ENCODE measurements at regions of chr6 and their contacts with region 1.

Region 1: DNA sequence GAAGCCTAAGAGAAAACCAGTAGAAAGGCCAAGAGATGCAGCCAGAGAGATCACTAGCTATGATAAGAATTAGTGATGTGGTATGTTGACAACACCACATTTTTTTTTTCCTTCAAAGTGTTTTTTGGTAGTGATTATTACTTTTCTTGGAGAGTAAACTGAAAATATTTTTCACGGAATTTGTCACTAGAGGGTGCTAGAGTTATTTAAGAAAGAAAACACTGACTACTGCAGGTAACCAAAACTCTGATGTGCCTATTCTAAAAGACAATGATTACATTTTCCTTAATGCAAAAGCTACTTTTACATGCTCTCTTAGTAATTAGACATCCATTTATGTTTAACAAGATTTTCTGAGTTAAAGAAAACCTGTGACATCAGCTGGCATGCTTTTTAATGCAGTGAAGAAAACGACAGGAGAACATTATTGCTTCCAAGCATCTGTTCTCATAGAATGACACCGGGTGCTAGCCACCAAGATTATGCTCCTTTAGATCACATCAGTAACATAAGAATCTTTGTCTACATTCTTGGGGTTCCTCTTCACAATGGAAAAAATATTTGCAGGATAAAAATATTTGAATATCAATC is 28.8 kb downstream of the RWDD2A start:
- DNase-seq: peak in 4 of 5 donors; percentile 10 to 27 (median 19)
- H3K4me3 ChIP-seq: no peak overlapping the region
- H3K4me3 Mint-ChIP-seq: no peak overlapping the region
- H3K27ac ChIP-seq: no peak overlapping the region
- H3K27ac Mint-ChIP-seq: no peak overlapping the region
- H3K4me1 ChIP-seq: no peaks in the 10 kb centered on the region
- H3K4me1 Mint-ChIP-seq: no peaks in the 10 kb centered on the region
- H3K27me3 ChIP-seq: no peaks in the 10 kb centered on the region
- H3K27me3 Mint-ChIP-seq: peaks cover 0 to 1% of the 10 kb centered on the region in 2 donors

Region 2: DNA sequence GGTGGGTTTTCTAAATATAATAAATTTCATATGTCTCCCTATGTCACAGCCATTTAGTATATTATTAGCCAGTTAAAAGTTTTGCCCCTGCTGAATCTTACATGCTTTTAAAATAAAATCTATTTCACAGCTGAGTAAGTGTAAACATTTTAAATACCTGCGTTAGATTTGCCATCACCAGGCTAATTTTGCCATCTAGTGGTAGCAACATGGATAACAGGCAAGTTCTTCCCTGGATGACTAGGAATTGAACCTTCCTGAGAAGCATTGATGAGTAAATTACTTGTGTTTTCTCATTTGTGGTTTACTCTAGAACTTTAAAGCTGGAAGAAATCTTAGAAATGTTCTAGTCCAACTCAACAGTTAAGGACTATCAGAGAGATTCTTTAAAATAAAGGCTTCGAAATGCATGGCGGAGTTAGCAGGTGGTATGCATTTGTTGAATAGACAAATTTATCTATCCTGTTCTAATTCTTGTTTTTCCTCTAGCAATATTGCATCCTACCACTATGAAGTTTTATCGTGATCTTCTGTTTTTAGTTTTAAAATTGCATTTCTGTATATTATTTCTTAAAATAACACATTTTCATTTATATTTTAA is 293.0 kb after region 1 on chr6:
- CTCF ChIA-PET with region 1: interaction called, 41 read pairs
- POLR2A ChIA-PET with region 1: no interaction called
- intact Hi-C with region 1: no loop called
- DNase-seq: peak in 4 of 5 donors; percentile 23 to 31 (median 26)
- H3K4me3 ChIP-seq: no peak overlapping the region
- H3K4me3 Mint-ChIP-seq: no peak overlapping the region
- H3K27ac ChIP-seq: no peak overlapping the region
- H3K27ac Mint-ChIP-seq: no peak overlapping the region
- H3K4me1 ChIP-seq: no peaks in the 10 kb centered on the region
- H3K4me1 Mint-ChIP-seq: peaks cover 6 to 18% (median 13%) of the 10 kb centered on the region in 4 donors
- H3K27me3 ChIP-seq: no peaks in the 10 kb centered on the region
- H3K27me3 Mint-ChIP-seq: peaks cover 25 to 35% of the 10 kb centered on the region in 2 donors

Measured in CD4-positive, alpha-beta memory T cell (primary cell).